ENCODE measurements at regions of chrX and their contacts with region 1.

Region 1: DNA sequence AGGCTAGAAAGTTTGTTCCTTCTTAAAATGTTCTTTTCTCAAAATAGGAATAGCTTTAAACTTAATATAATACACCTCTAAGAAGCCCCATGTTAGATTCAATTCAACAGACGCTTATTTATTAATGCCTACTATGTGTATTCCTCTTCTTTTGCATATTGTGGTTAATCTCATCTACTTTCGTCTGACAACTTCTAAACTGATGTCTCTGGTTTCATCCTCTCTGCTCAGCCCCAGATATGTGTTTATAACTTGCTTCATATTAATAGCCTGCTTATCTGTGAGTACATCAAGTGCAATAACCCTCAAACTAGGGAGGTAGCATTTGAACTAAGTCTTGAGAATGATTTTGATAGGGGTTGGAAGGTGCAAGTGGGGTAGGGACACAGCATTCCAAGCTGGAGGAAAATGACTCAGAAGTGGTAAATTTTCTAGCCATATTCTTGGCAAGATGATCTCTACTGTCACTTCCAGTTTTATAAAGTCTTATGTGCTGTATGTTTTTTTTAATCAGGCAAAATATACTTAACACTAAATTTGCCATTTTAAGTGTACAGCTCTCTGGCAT is 37.0 kb downstream of the STK26 start:
- DNase-seq: no peak
- H3K4me3 ChIP-seq: no peak overlapping the region
- CTCF ChIP-seq: no peak

Region 2: DNA sequence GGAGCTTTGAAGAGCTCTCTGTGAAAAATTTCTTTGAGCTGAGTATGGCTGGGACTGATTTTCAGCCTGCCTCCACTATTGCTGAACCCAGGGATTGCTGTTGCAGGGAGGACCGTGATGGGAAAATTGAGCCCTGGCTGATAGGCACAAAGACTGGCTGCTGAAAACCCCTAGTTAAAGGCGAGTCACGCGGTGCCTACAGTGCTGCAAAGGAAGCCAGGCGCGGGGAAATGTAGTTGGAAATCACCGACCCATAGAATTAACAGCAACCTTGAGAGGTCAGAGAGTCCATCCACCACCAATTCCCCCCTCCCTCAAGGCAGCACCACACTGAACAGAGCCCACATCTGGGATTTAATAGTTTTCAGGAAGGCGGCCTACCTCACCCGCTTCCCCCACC is 41.7 kb after region 1 on chrX:
- in situ Hi-C with region 1: no loop called
- DNase-seq: no peak
- H3K4me3 ChIP-seq: no peak overlapping the region
- CTCF ChIP-seq: no peak

Region 3: DNA sequence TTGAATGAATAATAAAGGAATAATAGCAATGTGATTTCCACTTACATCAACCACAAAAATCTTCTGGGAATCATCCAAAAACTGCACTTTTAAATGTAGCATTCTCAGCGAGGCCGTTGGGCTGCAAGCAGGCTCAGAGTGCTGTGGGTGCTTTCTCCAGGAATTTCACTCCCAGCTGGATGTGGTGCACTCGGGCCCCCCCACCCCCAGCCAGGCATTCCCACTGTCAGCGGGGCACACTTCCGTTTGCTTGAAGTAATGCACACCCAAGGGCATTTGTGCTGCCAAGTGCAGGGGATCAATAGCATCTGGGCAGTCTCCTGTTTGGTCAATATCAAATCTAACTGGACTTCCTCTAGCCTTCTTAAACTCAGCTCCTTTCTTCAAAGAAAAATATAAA is 67.7 kb after region 1 on chrX and contains the start of gene FRMD7:
- in situ Hi-C with region 1: loop called (anchors 10 kb)
- DNase-seq: peak; percentile 19
- H3K4me3 ChIP-seq: no peak within 1 kb of the TSS
- CTCF ChIP-seq: no peak